ENCODE measurements at regions of chr7 and their contacts with region 1.

Region 1: DNA sequence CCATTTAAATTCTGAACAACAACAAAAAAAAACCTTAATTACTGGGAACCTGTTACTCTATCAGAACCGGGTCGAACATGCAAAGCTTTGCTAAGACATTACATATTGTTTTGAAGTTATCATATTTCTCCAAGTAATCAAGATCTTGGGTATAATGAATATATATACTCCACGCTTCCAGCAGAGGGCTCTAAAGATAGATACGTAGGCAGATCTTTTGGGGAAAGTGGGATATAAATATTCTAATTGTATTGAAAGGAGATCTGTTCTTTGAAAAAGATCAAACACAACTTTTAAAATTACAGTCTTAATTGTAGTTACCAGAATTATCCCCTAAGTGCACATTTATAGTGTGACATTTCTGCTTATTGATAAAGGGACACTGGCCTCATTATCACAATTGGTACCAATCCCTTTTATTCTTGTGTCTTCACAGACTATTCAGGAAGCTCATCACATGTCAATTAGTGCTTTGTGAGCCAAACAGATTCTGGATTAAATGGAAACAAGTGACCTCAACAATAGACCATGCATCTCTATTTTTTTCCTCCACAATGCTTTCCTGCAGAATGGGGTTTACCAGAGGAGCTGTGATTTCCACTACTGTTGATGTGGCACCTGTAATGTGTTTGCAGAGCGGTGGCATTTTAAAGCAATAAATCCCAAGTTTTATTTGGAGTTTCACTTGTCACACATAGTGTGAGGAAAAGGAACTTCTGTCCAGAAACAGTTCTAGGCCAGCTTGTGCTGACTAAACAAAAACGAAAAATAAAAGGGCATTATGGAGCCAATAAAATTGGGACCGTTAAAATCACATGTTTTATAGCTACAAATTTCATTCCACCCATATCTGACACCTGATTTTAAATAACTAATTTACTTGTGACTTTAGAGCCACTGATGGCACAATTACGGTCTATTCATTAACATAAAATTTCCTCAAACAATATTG is 122.4 kb downstream of the CTTNBP2 start:
- DNase-seq: no peak
- ATAC-seq: no peak

Region 2: DNA sequence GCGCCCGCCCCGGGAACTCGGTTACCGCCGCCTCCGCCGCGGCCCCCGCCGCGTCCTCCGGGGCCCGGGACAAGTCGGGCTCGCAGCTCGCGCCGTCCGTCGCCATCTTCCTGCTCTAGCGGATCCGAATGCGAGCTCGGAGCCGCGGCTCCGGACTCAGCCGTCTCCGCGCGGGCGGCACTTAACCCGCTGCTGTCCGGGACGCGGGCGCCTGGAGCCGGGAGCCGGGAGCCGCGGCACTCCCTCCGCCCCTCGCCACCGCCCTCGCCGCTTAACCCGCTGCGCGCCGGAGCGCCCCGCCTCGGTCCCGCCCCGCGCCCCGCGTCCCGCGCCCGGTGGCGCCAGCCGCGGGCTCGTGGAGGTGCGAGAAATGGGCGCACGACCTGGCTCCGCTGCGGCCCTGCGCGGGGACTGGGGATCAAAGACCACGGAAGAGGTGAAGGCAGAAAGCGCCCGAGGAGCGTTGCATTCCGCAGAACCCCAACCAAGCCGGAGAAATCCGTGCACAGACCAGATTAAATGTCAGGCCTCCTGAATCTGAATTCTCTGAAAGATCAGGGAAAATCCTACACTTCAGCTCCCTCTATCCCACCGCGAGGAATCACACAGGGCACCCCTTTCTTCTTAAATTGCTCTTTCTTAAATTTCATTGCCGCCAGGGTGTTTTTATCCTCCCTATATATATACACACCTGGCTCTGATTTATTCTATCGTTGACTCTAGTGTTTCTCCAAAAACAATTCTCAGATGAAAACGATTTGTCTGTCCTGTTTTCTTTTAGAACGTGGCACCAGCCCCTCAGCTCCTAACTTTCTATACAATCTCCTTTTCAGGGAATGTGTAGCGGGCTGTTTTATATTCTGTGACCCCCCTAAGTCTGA is 122.7 kb after region 1 on chr7 and contains the start of gene CTTNBP2:
- intact Hi-C with region 1: loop called (anchors 2 to 10 kb)
- DNase-seq: peak; percentile 70
- ATAC-seq: peak; percentile 88 to 90
- total RNA-seq, gene CTTNBP2: 4.3 to 7.0 TPM

Region 3: GRCh38 chr7:118094040-118094439 is 343.2 kb after region 1 on chr7:
- intact Hi-C with region 1: loop called in 1 of 2 experiments (anchors 5 kb)
- DNase-seq: no peak
- ATAC-seq: no peak

Region 4: DNA sequence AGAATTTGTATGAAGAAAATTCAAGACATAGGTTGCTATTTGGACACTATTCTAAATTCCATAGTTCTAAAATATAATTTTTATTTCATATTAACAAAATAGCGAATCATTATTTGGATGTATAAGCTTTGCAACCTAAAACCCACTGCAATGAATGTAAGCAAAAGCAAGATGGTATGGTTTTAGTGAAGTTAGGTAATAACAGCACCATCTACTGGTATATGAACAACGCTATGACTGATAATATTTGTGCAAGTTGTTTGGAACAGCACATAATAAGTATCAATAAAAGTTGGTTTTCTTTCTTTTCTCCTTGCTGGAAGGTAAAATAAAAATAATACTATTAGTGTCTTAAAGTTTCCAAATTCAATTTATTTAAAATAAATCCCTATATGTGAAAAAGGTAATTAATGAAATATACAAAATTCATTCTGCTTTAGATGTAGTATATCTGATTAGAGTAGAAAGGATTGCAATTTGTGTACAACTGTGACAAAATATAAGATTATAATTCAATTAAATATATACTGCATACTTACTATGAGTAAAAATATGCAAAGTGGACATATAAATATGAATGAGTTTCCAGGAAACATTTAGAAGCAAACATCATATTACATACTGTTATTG is 354.0 kb after region 1 on chr7:
- intact Hi-C with region 1: loop called in 1 of 2 experiments (anchors 2 kb)
- DNase-seq: no peak
- ATAC-seq: no peak

Region 5: DNA sequence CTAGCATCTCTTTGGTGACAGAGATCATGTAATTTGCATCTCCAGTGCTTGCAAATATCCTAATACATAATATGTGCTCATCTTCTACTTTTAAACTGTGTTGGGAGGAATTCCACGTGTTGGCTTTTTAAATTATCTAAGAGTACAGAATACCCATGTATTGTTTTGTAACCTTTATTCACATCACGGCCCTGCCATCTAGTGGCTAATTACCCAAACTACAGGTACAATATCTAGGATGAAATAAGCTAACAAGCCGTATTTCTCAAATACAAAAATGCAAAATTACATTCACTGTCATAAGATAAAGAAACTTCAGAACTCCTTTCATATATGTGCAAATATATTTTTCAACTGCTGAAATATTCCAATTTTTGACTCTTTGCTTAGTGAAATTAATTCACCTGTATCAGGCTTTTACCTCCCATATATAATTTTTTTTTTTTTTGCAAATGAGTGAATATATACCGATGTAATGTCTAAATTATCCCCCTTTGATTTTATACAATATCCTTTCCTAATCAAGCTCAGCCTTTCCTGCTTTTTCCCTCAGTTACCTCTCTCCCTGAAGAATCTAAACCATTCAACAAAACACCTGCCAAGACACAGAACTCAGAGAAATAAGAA is 402.8 kb after region 1 on chr7:
- intact Hi-C with region 1: loop called in 1 of 2 experiments (anchors 10 kb)
- DNase-seq: no peak
- ATAC-seq: peak in 1 of 2 donors; percentile 23

Measured in left cardiac atrium (tissue), 4 donors.